CD14-positive monocyte (primary cell): ENCODE measurements at regions of chr20 and their contacts with region 1.

Region 1: DNA sequence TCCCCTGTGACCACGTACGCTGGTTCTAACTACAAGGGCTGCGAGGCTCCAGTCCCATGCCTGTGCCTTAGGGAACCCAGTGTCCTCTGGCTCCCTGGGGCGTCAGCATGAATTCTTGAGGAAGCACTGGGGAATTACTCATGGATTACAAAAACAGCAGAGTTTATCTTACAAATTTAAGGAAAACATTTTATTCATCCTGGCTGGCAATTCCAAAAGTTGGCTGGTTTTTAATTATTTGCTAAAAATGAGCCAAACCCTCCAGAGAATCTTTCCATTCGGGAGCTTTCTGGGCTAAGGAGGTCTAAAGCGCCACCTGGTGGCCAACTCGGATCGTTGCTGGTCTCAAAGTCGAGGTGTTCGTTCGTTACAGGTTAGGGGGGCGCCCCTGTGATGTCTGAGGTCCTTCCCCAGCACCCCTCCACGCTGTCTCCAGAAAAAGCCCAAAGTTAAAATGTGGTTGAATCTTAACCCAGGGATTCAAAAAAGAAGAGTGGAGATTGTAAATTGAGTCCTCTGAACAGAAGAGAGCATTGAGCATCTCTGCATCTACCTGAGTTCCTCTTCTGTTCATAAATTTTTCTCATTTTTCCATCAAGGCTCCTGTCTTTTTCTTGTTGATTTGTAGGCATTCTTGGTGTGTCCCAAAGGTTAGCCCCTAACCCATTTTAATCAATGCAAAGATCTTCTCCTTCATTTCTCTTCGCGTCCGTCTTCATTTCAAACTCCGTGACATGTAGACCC is 99.4 kb downstream of the BFSP1 start:
- DNase-seq: peak; percentile 2 to 33 (median 21)
- H3K4me3 ChIP-seq: no peak overlapping the region
- H3K4me3 Mint-ChIP-seq: no peak overlapping the region
- H3K27ac ChIP-seq: no peak overlapping the region
- H3K27ac Mint-ChIP-seq: no peak overlapping the region
- H3K4me1 ChIP-seq: no peaks in the 10 kb centered on the region
- H3K4me1 Mint-ChIP-seq: no peaks in the 10 kb centered on the region
- H3K27me3 ChIP-seq: no peaks in the 10 kb centered on the region
- H3K27me3 Mint-ChIP-seq: peaks cover 3 to 11% (median 8%) of the 10 kb centered on the region in 3 donors
- CTCF ChIP-seq: peak; percentile 97

Region 2: GRCh38 chr20:16801919-16802911 is 629.6 kb before region 1 on chr20:
- intact Hi-C with region 1: loop called (anchors 5 kb)
- DNase-seq: peak in 2 of 3 donors; percentile 8 to 18
- H3K4me3 ChIP-seq: no peak overlapping the region
- H3K4me3 Mint-ChIP-seq: no peak overlapping the region
- H3K27ac ChIP-seq: no peak overlapping the region
- H3K27ac Mint-ChIP-seq: no peak overlapping the region
- H3K4me1 ChIP-seq: no peaks in the 10 kb centered on the region
- H3K4me1 Mint-ChIP-seq: no peaks in the 10 kb centered on the region
- H3K27me3 ChIP-seq: peaks cover 0 to 2% of the 10 kb centered on the region in 2 donors
- H3K27me3 Mint-ChIP-seq: peaks cover 1 to 16% (median 15%) of the 10 kb centered on the region in 3 donors
- CTCF ChIP-seq: peak; percentile 86

Region 3: DNA sequence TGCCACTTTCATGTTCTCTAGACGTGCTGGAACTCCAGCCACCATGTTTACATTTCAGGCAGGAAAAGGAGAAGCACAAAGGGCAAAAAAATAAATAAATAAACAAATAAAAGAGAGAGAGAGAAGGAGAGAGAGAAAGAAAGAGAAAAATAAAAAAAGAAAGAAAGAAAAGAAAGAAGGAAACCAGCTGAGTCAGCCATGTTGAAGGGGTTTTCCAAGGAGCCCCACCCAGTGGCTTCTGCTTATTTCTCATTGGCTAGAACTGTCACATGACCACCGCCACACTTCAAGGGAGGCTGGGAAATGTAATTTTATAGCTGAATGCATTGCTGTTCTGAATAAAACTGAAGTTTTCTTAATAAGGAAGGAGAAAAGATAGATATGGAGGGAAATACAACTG is 28.3 kb after region 1 on chr20:
- intact Hi-C with region 1: no loop called
- DNase-seq: no peak
- H3K4me3 ChIP-seq: no peak overlapping the region
- H3K4me3 Mint-ChIP-seq: no peak overlapping the region
- H3K27ac ChIP-seq: no peak overlapping the region
- H3K27ac Mint-ChIP-seq: no peak overlapping the region
- H3K4me1 ChIP-seq: no peaks in the 10 kb centered on the region
- H3K4me1 Mint-ChIP-seq: no peaks in the 10 kb centered on the region
- H3K27me3 ChIP-seq: no peaks in the 10 kb centered on the region
- H3K27me3 Mint-ChIP-seq: peaks cover 1 to 10% (median 2%) of the 10 kb centered on the region in 3 donors
- CTCF ChIP-seq: no peak